A549 (cell line): ENCODE measurements at regions of chr1 and their contacts with region 1.

Region 1: DNA sequence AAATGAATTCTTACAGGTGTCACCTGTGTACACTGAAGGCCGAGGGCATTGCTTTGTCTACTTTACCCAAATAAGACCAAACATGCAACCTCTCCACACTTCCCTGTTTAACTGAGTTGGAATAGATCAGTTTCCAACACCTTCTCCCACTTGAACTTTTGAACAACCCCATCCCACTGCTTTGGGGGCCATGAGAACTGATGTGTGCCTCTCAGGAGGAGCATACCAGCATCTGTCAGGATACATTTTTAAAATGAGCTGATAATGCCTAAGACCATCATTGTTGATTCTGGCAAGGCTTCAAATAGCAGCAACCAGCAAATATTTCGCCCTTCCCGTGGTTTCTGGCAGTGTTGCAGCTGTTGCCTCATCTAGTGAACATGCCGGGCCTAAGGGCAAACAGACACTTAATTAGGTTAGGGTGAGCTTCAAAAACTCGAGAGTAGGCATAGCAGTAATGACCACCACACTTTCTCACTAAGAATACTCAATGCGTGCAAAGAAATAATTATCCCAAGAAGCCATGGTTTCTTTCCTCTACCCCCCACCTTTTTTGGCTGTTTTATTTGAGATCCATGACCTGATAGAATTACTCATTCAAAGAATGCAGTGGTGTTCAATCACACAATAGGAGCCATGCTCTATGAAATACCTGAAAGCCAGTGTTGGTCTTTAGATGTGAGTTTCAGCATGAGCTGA is 63.7 kb downstream of the MAP10 start:
- DNase-seq: peak; percentile 7 to 66
- ATAC-seq: peak; percentile 82 to 87
- H3K4me3 ChIP-seq: no peak overlapping the region
- H3K27ac ChIP-seq: peak overlapping the region; percentile 55 to 75
- H3K4me1 ChIP-seq: peaks cover 12% of the 10 kb centered on the region; the same call in 2 of the 3 replicates
- CTCF ChIP-seq: no peak
- EP300 ChIP-seq: peak in 1 of 2 experiments; percentile 46; a peak in 1 of 5 replicates
- POLR2A ChIP-seq: peak; percentile 54
- RAD21 ChIP-seq: no peak

Region 2: GRCh38 chr1:232630047-232630893 is 238.7 kb before region 1 on chr1 and contains the start of gene SIPA1L2:
- CTCF ChIA-PET with region 1: no interaction called
- POLR2A ChIA-PET with region 1: interaction called, 10 read pairs
- DNase-seq: peak; percentile 92 to 97
- ATAC-seq: peak; percentile 90 to 96
- H3K4me3 ChIP-seq: peak within 1 kb of the TSS; percentile 75
- H3K27ac ChIP-seq: peak within 1 kb of the TSS; percentile 88 to 96
- H3K4me1 ChIP-seq: peaks cover 16% of the 10 kb centered on the region; the same call in 2 of the 3 replicates
- CTCF ChIP-seq: peak; percentile 75
- EP300 ChIP-seq: no peak
- POLR2A ChIP-seq: peak; percentile 49
- RAD21 ChIP-seq: peak; percentile 89 to 92
- polyA plus RNA-seq, gene SIPA1L2: 16.4 and 16.9 TPM in 2 replicates